ENCODE measurements at regions of chr4 and their contacts with region 1.

Region 1: GRCh38 chr4:24794916-24795665 is at the start of gene SOD3:
- DNase-seq: peak; percentile 72
- ATAC-seq: peak; percentile 92
- H3K4me3 Mint-ChIP-seq: peak within 1 kb of the TSS; percentile 70
- H3K27ac Mint-ChIP-seq: peak within 1 kb of the TSS; percentile 54
- H3K4me1 Mint-ChIP-seq: peaks cover 24% of the 10 kb centered on the region
- H3K27me3 Mint-ChIP-seq: peaks cover 59% of the 10 kb centered on the region
- CTCF ChIP-seq: no peak
- total RNA-seq, gene SOD3: 4.1 to 8.2 TPM (median 8.0 TPM) in 3 replicates

Region 2: GRCh38 chr4:24736066-24736465 is 59.0 kb before region 1 on chr4:
- CTCF ChIA-PET with region 1: interaction called, 22 read pairs
- POLR2A ChIA-PET with region 1: no interaction called
- DNase-seq: peak; percentile 31
- ATAC-seq: peak; percentile 80
- H3K4me3 Mint-ChIP-seq: no peak overlapping the region
- H3K27ac Mint-ChIP-seq: no peak overlapping the region
- H3K4me1 Mint-ChIP-seq: no peaks in the 10 kb centered on the region
- H3K27me3 Mint-ChIP-seq: peaks cover 9% of the 10 kb centered on the region; the same call in 1 of the 2 replicates
- CTCF ChIP-seq: peak; percentile 28; the same call in 1 of the 2 replicates

Region 3: GRCh38 chr4:24743931-24744330 is 51.2 kb before region 1 on chr4:
- CTCF ChIA-PET with region 1: interaction called, 21 read pairs
- POLR2A ChIA-PET with region 1: no interaction called
- DNase-seq: peak; percentile 42
- ATAC-seq: peak; percentile 95
- H3K4me3 Mint-ChIP-seq: no peak overlapping the region
- H3K27ac Mint-ChIP-seq: peak overlapping the region; percentile 94
- H3K4me1 Mint-ChIP-seq: peaks cover 25% of the 10 kb centered on the region
- H3K27me3 Mint-ChIP-seq: no peaks in the 10 kb centered on the region
- CTCF ChIP-seq: no peak

Region 4: DNA sequence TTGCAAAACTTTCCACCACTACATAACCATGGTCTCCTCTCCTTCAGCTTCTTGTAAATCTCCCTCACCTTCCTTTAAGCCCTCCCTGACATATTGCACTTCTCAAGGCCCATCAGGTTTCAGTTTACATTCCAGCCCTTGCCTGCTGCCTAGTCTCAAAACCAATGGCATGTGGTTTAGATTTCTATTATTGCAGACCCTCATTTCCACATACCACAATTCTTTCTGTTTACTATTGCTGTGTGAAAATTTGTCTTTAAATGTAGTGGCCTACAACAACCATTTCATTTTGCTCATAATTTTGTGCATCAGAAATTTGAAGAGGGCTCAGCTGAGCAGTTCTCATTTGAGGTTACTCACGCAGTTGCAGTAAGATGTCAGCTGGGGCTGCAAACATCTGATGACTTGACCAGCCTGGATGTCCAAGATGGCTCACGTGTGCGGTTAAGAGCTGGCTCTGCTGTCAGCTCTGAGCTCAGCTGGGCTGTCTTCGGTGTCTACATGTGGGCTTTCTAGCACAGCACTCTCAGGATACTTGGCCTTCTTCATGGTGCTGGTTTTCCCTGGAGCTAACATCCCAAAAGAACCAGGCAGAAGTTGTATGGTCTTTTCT is 29.6 kb before region 1 on chr4:
- CTCF ChIA-PET with region 1: interaction called, 10 read pairs
- POLR2A ChIA-PET with region 1: no interaction called
- DNase-seq: no peak
- ATAC-seq: no peak
- H3K4me3 Mint-ChIP-seq: no peak overlapping the region
- H3K27ac Mint-ChIP-seq: no peak overlapping the region
- H3K4me1 Mint-ChIP-seq: peaks cover 15% of the 10 kb centered on the region
- H3K27me3 Mint-ChIP-seq: no peaks in the 10 kb centered on the region
- CTCF ChIP-seq: no peak

Region 5: GRCh38 chr4:24809376-24809775 is 14.3 kb after region 1 on chr4:
- CTCF ChIA-PET with region 1: interaction called, 18 read pairs
- POLR2A ChIA-PET with region 1: no interaction called
- DNase-seq: peak; percentile 45
- ATAC-seq: peak; percentile 96
- H3K4me3 Mint-ChIP-seq: no peak overlapping the region
- H3K27ac Mint-ChIP-seq: no peak overlapping the region
- H3K4me1 Mint-ChIP-seq: peaks cover 32% of the 10 kb centered on the region
- H3K27me3 Mint-ChIP-seq: peaks cover 7% of the 10 kb centered on the region; the same call in 1 of the 2 replicates
- CTCF ChIP-seq: no peak

Region 6: DNA sequence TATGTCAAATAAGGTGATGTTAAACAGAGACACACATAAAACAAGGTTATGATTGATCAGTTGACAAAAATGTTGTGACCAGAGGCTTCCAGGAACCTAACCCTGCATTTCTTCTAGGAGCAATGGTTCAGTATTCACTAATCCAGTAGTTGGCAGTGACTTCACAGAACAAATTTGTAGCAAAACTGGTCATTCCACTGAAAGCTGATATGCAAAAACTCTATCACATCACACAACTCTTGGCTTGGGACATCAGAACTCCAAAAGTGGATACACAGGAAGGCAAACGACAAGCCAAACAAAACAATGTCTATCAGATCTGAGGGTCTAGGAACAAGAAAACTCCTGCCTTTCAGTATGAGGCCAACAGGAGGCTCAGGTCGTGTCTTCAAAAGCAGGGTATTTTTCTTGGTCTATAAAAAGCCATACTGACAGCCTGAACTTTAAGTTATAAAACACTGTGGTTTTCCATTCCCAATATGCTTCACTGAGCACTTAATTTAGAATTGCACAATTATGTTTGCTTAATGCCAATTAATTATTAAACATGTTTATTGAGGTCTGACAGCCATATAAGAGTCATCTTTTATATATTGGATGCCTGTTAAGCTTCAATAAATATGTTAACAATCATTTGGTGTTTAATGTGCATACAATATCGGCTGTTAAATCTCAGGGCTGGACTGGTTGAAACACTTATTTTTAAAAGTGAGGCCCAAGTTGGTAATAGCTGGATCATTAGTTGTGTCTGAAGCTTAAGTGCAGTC is 45.9 kb after region 1 on chr4:
- CTCF ChIA-PET with region 1: no interaction called
- POLR2A ChIA-PET with region 1: no interaction called
- DNase-seq: no peak
- ATAC-seq: no peak
- H3K4me3 Mint-ChIP-seq: no peak overlapping the region
- H3K27ac Mint-ChIP-seq: no peak overlapping the region
- H3K4me1 Mint-ChIP-seq: peaks cover 1% of the 10 kb centered on the region; the same call in 1 of the 2 replicates
- H3K27me3 Mint-ChIP-seq: no peaks in the 10 kb centered on the region
- CTCF ChIP-seq: no peak